ENCODE measurements at regions of chr7 and their contacts with region 1.

Region 1: GRCh38 chr7:26291699-26292538 is at the start of gene SNX10:
- DNase-seq: peak; percentile 76
- H3K4me3 Mint-ChIP-seq: peak within 1 kb of the TSS; percentile 93
- H3K27ac Mint-ChIP-seq: peak within 1 kb of the TSS; percentile 90
- H3K4me1 Mint-ChIP-seq: peaks cover 28% of the 10 kb centered on the region
- H3K27me3 Mint-ChIP-seq: no peaks in the 10 kb centered on the region
- total RNA-seq, gene SNX10: 43.1 to 44.1 TPM

Region 2: DNA sequence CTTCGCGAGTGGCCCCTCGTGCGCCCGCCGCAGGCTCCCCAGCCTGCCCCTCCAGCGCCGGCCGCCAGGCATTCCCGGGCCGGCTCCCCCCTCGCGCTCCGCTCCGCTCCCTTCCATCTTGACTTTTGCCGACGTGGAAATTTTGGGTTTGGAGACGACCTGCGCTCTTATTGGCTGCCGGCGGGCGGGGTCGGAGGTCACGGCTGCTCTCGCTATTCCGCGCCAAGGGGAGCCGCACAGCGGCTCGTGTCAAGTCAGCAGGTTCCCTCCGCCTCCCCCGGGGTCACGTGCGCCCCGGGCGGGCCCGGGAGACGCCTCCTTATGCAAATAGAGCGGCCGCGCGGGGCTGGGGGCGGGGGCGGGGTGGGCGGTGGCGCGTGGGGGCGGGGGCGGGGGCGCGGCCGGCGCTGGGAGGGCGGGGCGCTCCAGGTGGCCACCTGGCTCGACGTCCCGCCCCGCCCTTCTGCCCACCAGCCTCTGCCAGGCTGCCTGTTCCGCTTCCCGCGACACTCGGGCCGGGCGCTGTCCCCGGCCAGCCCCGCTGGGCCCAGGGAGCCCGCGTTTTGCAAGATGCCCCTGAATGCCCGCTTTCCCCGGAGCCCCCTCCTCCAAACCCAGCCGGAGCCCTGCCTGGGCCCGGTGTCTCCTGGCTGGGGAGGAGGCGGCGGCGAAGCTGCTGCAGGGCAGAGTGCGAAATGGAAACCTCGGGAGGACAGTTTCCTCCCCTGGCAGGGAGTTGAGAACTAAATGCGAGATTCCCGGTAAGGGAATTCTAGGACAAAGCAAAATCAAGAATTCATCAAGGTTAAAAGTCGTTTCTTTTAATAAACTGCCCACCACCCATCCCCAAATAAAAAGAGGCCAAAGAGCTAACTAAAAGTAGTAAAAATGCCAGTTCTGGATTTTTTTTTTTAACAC is 340.6 kb before region 1 on chr7:
- CTCF ChIA-PET with region 1: no interaction called
- POLR2A ChIA-PET with region 1: no interaction called
- intact Hi-C with region 1: loop called (anchors 5 kb)
- DNase-seq: peak; percentile 91
- H3K4me3 Mint-ChIP-seq: peak overlapping the region; percentile 75
- H3K27ac Mint-ChIP-seq: peak overlapping the region; percentile 56
- H3K4me1 Mint-ChIP-seq: peaks cover 11% of the 10 kb centered on the region
- H3K27me3 Mint-ChIP-seq: peaks cover 4% of the 10 kb centered on the region

Region 3: GRCh38 chr7:26151953-26152781 is 139.8 kb before region 1 on chr7 and contains the start of gene NFE2L3:
- CTCF ChIA-PET with region 1: no interaction called
- POLR2A ChIA-PET with region 1: interaction called, 4 read pairs
- intact Hi-C with region 1: loop called (anchors 1 kb)
- DNase-seq: peak; percentile 90
- H3K4me3 Mint-ChIP-seq: peak within 1 kb of the TSS; percentile 98
- H3K27ac Mint-ChIP-seq: peak within 1 kb of the TSS; percentile 92
- H3K4me1 Mint-ChIP-seq: peaks cover 51% of the 10 kb centered on the region
- H3K27me3 Mint-ChIP-seq: no peaks in the 10 kb centered on the region
- total RNA-seq, gene NFE2L3: 27.3 to 30.3 TPM

Region 4: GRCh38 chr7:26278770-26279169 is 13.1 kb before region 1 on chr7:
- CTCF ChIA-PET with region 1: interaction called, 3 read pairs
- POLR2A ChIA-PET with region 1: interaction called, 3 read pairs
- intact Hi-C with region 1: loop called (anchors 1 kb)
- DNase-seq: no peak
- H3K4me3 Mint-ChIP-seq: no peak overlapping the region
- H3K27ac Mint-ChIP-seq: no peak overlapping the region
- H3K4me1 Mint-ChIP-seq: peaks cover 24% of the 10 kb centered on the region
- H3K27me3 Mint-ChIP-seq: peaks cover 3% of the 10 kb centered on the region

Region 5: GRCh38 chr7:26667500-26668133 is 375.7 kb after region 1 on chr7:
- CTCF ChIA-PET with region 1: interaction called, 3 read pairs
- POLR2A ChIA-PET with region 1: no interaction called
- intact Hi-C with region 1: loop called (anchors 10 kb)
- DNase-seq: peak; percentile 61
- H3K4me3 Mint-ChIP-seq: no peak overlapping the region
- H3K27ac Mint-ChIP-seq: no peak overlapping the region
- H3K4me1 Mint-ChIP-seq: peaks cover 19% of the 10 kb centered on the region
- H3K27me3 Mint-ChIP-seq: no peaks in the 10 kb centered on the region

Region 6: GRCh38 chr7:27150568-27151340 is 858.8 kb after region 1 on chr7:
- CTCF ChIA-PET with region 1: no interaction called
- POLR2A ChIA-PET with region 1: no interaction called
- intact Hi-C with region 1: loop called (anchors 10 kb)
- DNase-seq: peak; percentile 76
- H3K4me3 Mint-ChIP-seq: peak overlapping the region; percentile 52
- H3K27ac Mint-ChIP-seq: no peak overlapping the region
- H3K4me1 Mint-ChIP-seq: peaks cover 38% of the 10 kb centered on the region
- H3K27me3 Mint-ChIP-seq: peaks cover 86% of the 10 kb centered on the region

Measured in activated CD4-positive, alpha-beta memory T cell treated with anti-CD3 and anti-CD28 coated beads for 36 hours (primary cell).